Activated naive CD4-positive, alpha-beta T cell treated with anti-CD3 and anti-CD28 coated beads, Interleukin-2, amount 10 ng/mL, durations not matched to agents 7 days and 5 days (primary cell): ENCODE measurements at regions of chr14 and their contacts with region 1.

Region 1: GRCh38 chr14:54773171-54773975 is 129.3 kb downstream of the GCH1 start:
- DNase-seq: peak; percentile 86
- H3K4me3 Mint-ChIP-seq: peak overlapping the region; percentile 27
- H3K27ac Mint-ChIP-seq: peak overlapping the region; percentile 79
- H3K4me1 Mint-ChIP-seq: peaks cover 50% of the 10 kb centered on the region
- H3K27me3 Mint-ChIP-seq: peaks cover 33% of the 10 kb centered on the region

Region 2: DNA sequence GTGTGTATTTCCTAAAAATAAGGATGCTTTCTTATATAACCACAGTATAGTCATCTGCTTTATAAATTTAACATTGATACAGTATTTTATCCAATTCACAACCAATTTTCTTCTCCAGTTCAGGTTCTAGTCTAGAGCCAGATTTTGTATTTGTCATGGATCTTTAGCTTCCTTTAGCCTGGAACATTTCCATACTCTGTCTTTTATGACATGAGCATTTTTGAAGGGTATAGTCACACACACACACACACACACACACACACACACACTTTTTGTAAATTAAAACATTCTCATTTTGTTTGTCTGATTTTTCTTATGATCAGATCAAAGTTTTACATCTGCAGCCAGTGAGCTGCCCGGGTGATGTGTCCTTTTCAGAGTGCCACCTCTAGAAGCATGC is 238.2 kb before region 1 on chr14:
- CTCF ChIA-PET with region 1: no interaction called
- DNase-seq: no peak
- H3K4me3 Mint-ChIP-seq: no peak overlapping the region
- H3K27ac Mint-ChIP-seq: no peak overlapping the region
- H3K4me1 Mint-ChIP-seq: peaks cover 3% of the 10 kb centered on the region
- H3K27me3 Mint-ChIP-seq: no peaks in the 10 kb centered on the region

Region 3: DNA sequence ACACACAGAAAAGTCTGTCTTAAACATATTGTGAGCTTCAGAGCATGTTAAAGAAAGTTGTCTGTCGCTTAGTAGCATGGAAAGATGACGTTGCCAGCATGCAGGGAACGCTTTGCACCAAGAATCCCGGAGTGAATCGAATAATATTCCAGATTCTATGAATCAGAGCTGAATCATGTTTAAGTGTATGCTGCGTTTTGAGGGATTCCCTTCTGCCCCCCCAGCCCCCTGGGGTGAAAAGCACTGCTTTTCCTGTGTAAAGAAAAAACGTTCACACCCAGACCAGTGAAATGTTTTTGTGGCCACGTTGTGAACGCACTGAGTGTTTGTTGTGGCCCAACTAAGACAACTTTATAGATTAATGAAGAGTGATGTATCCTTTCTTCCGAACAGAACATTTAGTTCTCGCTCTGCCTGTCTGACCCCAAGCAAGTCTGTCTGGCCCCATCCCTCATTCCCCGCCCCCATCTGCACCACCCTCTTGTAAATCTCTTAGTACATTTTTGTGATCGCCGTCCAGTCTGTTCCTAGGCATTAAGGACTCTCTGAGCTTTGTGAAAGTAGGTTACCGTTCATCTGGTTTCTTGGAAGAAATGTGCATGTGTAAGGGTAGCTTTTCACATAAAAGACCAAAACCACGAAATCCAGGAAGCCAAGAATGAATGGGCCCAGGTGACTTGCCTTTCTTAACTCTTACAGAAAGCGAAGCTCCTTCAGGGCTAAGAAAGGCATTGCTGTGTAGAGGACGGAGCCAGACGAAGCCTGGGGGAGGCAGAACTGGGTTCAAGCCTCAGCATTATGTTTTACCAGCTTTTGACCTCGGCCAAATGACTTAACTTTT is 103.4 kb before region 1 on chr14:
- CTCF ChIA-PET with region 1: interaction called, 30 read pairs
- DNase-seq: peak; percentile 32
- H3K4me3 Mint-ChIP-seq: no peak overlapping the region
- H3K27ac Mint-ChIP-seq: peak overlapping the region; percentile 51
- H3K4me1 Mint-ChIP-seq: peaks cover 33% of the 10 kb centered on the region
- H3K27me3 Mint-ChIP-seq: peaks cover 22% of the 10 kb centered on the region

Region 4: GRCh38 chr14:54712465-54713200 is 60.7 kb before region 1 on chr14:
- CTCF ChIA-PET with region 1: interaction called, 12 read pairs
- DNase-seq: no peak
- H3K4me3 Mint-ChIP-seq: no peak overlapping the region
- H3K27ac Mint-ChIP-seq: no peak overlapping the region
- H3K4me1 Mint-ChIP-seq: peaks cover 22% of the 10 kb centered on the region
- H3K27me3 Mint-ChIP-seq: peaks cover 13% of the 10 kb centered on the region

Region 5: GRCh38 chr14:54739514-54739913 is 33.9 kb before region 1 on chr14:
- CTCF ChIA-PET with region 1: interaction called, 12 read pairs
- DNase-seq: no peak
- H3K4me3 Mint-ChIP-seq: no peak overlapping the region
- H3K27ac Mint-ChIP-seq: no peak overlapping the region
- H3K4me1 Mint-ChIP-seq: peaks cover 69% of the 10 kb centered on the region
- H3K27me3 Mint-ChIP-seq: peaks cover 22% of the 10 kb centered on the region

Region 6: GRCh38 chr14:54792288-54792687 is 18.9 kb after region 1 on chr14:
- CTCF ChIA-PET with region 1: interaction called, 16 read pairs
- DNase-seq: no peak
- H3K4me3 Mint-ChIP-seq: no peak overlapping the region
- H3K27ac Mint-ChIP-seq: no peak overlapping the region
- H3K4me1 Mint-ChIP-seq: no peaks in the 10 kb centered on the region
- H3K27me3 Mint-ChIP-seq: peaks cover 13% of the 10 kb centered on the region